GM18951 (cell line): ENCODE measurements at regions of chr22 and their contacts with region 1.

Region 1: DNA sequence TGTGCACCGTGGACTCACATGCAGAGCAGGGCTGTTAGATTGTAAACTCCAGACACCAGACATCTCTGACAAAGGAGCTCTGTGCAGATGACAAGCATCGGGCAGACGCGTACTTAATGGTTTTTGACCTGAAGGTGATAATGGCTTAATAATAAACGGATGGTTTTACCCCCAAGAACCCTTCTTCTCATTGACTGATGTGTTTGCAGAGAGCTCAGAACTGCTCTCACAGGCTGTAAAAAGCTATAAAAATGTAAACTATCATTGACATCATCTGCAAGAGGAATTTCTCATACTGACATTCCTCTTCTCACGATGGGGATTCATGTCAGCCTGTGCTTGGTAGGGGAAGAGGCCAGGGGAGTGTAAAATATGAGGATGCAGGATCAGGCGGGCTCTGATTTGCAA is 8.6 kb upstream of the ARHGAP8 start:
- POLR2A ChIP-seq: no peak

Region 2: DNA sequence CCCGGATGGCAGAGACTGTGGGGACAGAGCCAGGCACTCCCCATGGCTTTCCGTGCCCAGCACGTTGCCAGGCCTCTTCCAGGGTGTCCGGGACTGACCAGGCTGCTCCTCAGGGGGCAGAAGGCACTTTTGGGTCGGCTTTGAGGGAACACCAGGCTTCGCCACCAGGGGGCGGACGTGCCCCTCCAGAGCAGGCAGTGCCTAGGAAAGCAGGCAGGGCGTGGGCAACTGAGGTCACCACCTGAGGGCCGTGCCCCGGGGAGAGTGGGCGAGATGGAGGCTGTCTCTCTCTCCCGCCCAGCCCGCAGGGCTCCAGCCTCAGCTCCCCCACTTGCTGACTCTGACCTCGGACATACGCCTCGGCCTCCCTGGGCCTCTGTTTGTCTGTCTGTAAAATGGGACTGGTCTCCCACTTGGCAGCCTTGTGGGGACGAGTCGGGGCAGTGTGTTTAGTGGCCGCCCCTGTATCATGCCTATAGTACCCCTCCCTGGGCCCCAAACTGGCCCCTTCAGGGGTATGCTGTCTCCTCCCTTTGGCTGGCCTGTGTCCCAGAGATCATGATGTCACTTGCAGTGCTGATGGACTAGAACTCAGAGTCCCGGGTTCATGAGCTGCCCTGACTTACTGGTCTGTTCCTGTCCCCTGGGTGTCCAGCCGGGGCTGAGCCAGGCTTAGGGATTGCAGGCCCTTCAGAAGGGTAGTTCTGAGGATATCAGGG is 46.2 kb before region 1 on chr22:
- in situ Hi-C with region 1: loop called (anchors 5 kb)
- POLR2A ChIP-seq: no peak